Activated CD8-positive, alpha-beta T cell treated with anti-CD3 and anti-CD28 coated beads for 36 hours (primary cell): ENCODE measurements at regions of chr1 and their contacts with region 1.

Region 1: DNA sequence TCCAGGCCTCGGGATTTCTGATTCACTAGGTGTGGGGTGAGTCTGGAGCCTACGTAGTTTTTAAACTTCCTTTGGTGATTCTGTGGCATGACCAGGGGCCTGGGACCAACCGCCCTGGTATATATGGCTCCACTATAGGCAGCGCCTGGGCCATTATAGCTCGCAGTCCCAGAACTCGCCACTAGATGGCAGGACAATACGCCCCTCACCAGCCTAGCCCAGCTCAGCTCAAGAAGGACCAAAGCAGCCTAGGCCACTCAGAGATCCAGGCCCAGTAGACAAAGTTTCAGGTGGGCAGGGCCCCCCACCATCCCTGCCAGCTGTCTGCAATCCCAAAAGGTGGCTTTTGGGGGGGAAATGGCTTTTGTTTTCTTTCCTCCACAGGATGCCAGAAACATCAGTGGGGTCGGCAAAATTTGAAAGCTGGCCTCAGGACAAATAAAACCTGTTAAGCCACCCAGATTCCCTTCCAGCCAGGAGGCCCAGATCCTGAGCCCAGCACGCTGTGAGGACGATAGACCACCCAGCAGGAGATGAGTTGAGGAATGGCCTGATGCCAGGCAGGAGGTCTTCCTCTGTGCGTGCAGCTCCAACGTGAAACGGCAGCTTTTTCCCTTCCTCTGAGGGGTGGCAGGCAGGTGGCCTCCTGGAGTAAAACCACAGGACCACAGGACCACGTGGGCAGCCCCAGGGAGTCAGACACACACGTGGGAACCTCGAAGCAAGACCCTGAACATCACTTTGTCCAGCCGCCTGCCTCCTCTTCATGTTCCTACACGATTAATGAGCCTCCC is 24.8 kb upstream of the TMEM51 start:
- DNase-seq: peak; percentile 85
- ATAC-seq: peak; percentile 100
- H3K4me3 Mint-ChIP-seq: no peak overlapping the region
- H3K27ac Mint-ChIP-seq: no peak overlapping the region
- H3K4me1 Mint-ChIP-seq: no peaks in the 10 kb centered on the region
- H3K27me3 Mint-ChIP-seq: peaks cover 1% of the 10 kb centered on the region
- CTCF ChIP-seq: peak; percentile 81

Region 2: GRCh38 chr1:15145327-15145726 is 16.6 kb after region 1 on chr1:
- CTCF ChIA-PET with region 1: interaction called, 14 read pairs
- POLR2A ChIA-PET with region 1: no interaction called
- intact Hi-C with region 1: no loop called
- DNase-seq: no peak
- ATAC-seq: no peak
- H3K4me3 Mint-ChIP-seq: no peak overlapping the region
- H3K27ac Mint-ChIP-seq: no peak overlapping the region
- H3K4me1 Mint-ChIP-seq: peaks cover 5% of the 10 kb centered on the region
- H3K27me3 Mint-ChIP-seq: peaks cover 51% of the 10 kb centered on the region
- CTCF ChIP-seq: no peak

Region 3: DNA sequence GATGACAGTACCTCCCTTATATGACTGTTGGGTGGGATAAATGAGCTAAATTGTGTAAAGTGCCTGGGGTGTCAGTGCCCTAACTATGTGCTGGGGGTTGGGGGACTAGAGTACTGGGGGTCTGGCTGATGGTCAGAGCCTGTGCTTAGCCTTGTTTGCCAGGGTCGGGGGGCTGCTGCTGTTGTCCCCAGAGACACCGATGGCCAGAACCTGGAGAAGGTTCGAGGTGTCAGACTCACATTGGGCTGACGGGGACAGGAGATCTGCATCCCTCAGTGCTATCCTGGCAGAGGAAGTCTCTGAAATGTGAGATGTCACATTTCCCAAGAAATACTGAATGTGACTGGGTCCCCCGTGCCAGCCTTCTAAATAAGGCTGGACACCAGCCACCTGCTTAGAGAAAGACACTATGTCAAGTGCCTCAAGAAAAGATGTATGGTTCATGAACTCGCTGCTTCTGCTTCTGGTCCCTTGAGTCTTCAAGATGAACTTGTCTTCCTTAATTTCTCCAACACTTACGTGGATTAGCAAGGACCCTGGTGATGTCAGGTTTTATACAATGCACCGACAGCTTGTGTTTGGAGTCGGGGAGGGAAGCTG is 76.1 kb after region 1 on chr1:
- CTCF ChIA-PET with region 1: interaction called, 11 read pairs
- POLR2A ChIA-PET with region 1: no interaction called
- intact Hi-C with region 1: no loop called
- DNase-seq: no peak
- ATAC-seq: no peak
- H3K4me3 Mint-ChIP-seq: no peak overlapping the region
- H3K27ac Mint-ChIP-seq: no peak overlapping the region
- H3K4me1 Mint-ChIP-seq: no peaks in the 10 kb centered on the region
- H3K27me3 Mint-ChIP-seq: peaks cover 10% of the 10 kb centered on the region
- CTCF ChIP-seq: no peak

Region 4: GRCh38 chr1:15261155-15262002 is 132.7 kb after region 1 on chr1:
- CTCF ChIA-PET with region 1: interaction called, 14 read pairs
- POLR2A ChIA-PET with region 1: no interaction called
- intact Hi-C with region 1: no loop called
- DNase-seq: peak; percentile 73
- ATAC-seq: peak; percentile 93
- H3K4me3 Mint-ChIP-seq: peak overlapping the region; percentile 29
- H3K27ac Mint-ChIP-seq: no peak overlapping the region
- H3K4me1 Mint-ChIP-seq: peaks cover 25% of the 10 kb centered on the region
- H3K27me3 Mint-ChIP-seq: peaks cover 44% of the 10 kb centered on the region
- CTCF ChIP-seq: no peak

Region 5: GRCh38 chr1:15279576-15280230 is 151.0 kb after region 1 on chr1:
- CTCF ChIA-PET with region 1: interaction called, 118 read pairs
- POLR2A ChIA-PET with region 1: no interaction called
- intact Hi-C with region 1: no loop called
- DNase-seq: no peak
- ATAC-seq: no peak
- H3K4me3 Mint-ChIP-seq: no peak overlapping the region
- H3K27ac Mint-ChIP-seq: no peak overlapping the region
- H3K4me1 Mint-ChIP-seq: no peaks in the 10 kb centered on the region
- H3K27me3 Mint-ChIP-seq: peaks cover 5% of the 10 kb centered on the region
- CTCF ChIP-seq: no peak

Region 6: DNA sequence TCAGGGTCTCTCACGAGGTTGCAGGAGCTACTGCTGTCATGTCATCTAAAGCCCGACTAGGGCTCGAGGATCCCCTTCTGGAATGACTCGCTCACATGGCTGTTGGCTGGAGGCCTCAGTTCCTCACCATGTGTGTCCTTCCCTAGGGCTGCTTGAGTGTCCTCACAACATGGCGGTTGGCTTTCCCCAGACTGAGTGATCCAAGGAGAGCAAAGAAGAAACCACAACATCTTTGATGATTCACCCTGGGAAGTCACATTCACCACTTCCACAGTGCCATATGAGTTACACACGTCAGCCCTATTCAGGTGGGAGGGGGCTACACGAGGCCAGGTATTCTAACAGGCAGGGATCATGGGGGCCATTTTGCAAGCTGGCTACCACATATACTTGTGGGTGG is 183.2 kb after region 1 on chr1:
- CTCF ChIA-PET with region 1: interaction called, 11 read pairs
- POLR2A ChIA-PET with region 1: no interaction called
- intact Hi-C with region 1: no loop called
- DNase-seq: no peak
- ATAC-seq: no peak
- H3K4me3 Mint-ChIP-seq: no peak overlapping the region
- H3K27ac Mint-ChIP-seq: no peak overlapping the region
- H3K4me1 Mint-ChIP-seq: no peaks in the 10 kb centered on the region
- H3K27me3 Mint-ChIP-seq: peaks cover 3% of the 10 kb centered on the region
- CTCF ChIP-seq: no peak